Activated naive CD4-positive, alpha-beta T cell treated with anti-CD3 and anti-CD28 coated beads for 36 hours (primary cell): ENCODE measurements at regions of chr12 and their contacts with region 1.

Region 1: DNA sequence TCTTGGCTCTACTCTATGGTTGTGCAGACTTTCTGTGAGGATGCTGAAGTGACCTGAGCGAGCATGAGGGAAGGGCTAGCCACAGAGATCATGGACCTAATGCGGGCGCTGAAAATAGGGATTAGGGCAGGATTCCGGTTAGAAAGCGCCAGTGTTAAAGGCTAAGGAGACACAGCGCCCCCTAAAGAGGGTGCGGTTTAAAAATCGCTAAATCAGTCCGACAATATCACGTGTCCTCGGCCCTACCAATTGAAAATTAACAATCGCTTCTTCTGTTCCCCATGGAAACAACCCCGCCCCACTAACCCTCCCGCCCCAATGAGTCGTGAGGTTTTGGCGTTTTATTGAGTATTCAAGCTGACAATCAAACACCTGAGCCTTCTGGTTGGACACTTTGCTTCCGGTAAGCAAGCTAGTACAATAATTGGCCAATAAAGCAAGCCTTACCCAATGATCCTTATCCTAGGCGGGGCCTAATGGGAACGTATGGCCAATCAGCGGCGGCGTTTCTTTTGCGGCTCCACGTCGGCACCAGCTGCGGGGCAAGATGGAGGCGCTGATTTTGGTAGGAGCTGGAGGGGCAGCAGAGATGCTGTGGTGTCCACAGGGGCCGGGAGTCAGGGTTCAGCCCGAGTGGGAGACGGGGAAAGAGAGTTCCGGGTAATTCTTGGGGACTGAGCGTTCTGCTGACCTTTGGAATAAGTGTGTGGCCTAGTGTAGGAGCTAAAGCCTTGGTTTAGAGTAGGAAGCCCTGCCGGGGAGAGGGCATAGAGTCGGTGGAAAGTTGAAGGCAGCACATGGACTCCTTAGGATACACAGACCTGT is at the start of gene COPZ1:
- DNase-seq: peak; percentile 98
- H3K4me3 Mint-ChIP-seq: peak within 1 kb of the TSS; percentile 100
- H3K27ac Mint-ChIP-seq: peak within 1 kb of the TSS; percentile 93
- H3K4me1 Mint-ChIP-seq: peaks cover 44% of the 10 kb centered on the region
- H3K27me3 Mint-ChIP-seq: no peaks in the 10 kb centered on the region
- total RNA-seq, gene COPZ1: 98.0 to 105 TPM

Region 2: DNA sequence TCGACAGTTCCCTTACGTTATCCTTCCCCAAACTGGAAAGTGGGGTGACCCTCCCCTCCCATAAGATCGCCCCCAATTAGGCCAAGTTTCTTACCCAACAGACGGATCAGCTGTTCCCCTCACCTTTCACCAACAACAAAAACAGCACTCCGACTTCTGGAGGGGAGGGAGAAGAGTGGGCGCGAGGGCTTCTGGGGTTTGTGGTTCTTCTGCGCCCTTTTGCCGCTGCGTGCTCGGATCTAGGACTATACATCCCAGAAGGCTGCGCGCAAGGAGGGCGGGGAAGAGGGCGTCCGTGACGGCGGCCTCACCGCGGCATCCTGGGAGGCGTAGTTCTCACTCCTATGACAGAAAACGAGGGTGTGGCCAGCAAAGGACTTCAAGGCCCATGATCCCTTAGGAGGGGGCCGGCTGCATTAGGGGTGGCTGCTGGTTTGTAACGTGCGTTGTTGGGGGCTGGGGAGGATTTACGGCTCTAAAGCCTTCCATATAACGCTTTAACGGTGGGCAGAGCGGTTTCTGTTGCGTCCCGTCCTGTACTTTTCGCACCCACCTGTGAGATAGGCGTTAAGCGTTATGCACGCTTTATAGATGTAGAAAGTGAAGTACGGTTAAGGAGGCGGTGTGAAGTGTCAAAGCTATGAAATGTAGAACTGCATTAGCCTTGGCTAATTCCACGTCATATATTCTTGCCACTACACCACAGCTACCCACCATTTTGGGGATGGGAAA is 597.4 kb before region 1 on chr12 and contains the start of gene CALCOCO1:
- CTCF ChIA-PET with region 1: no interaction called
- intact Hi-C with region 1: loop called (anchors 1 kb)
- DNase-seq: peak; percentile 99
- H3K4me3 Mint-ChIP-seq: peak within 1 kb of the TSS; percentile 92
- H3K27ac Mint-ChIP-seq: peak within 1 kb of the TSS; percentile 87
- H3K4me1 Mint-ChIP-seq: peaks cover 16% of the 10 kb centered on the region
- H3K27me3 Mint-ChIP-seq: no peaks in the 10 kb centered on the region
- total RNA-seq, gene CALCOCO1: 8.1 to 8.3 TPM

Region 3: GRCh38 chr12:54075974-54076373 is 248.9 kb before region 1 on chr12:
- CTCF ChIA-PET with region 1: no interaction called
- intact Hi-C with region 1: no loop called
- DNase-seq: no peak
- H3K4me3 Mint-ChIP-seq: no peak overlapping the region
- H3K27ac Mint-ChIP-seq: no peak overlapping the region
- H3K4me1 Mint-ChIP-seq: peaks cover under 1% of the 10 kb centered on the region
- H3K27me3 Mint-ChIP-seq: peaks cover 4% of the 10 kb centered on the region

Region 4: DNA sequence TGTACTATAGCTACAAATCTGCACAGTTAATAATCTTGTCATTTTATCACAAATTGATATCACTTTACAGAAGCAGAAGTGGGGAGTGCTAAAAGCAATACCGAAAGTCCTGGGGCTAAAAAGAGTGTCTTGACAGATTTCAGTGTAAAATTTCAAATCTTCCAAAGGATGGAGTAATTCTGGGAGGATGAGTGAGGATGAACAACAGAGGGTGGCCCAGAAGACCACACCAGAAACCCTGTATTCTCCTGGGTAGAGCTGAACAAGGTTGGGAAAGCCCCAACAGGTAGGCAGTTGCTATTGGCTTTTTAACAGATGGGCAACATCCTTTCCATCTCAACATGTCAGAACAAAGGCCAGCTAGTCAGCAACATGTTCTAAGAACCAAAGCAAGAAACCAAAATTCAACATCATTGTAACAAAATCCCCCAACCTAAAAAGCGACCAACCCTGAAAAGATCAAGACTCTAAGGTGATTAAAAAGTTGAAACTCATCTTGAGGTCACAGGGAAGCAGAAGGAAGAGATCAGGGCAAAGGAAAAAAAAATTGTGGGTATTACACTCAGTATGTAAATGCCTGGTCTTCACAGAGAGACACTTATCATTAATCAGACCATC is 83.7 kb before region 1 on chr12:
- CTCF ChIA-PET with region 1: interaction called, 3 read pairs
- intact Hi-C with region 1: loop called (anchors 5 kb)
- DNase-seq: peak; percentile 16
- H3K4me3 Mint-ChIP-seq: no peak overlapping the region
- H3K27ac Mint-ChIP-seq: peak overlapping the region; percentile 80
- H3K4me1 Mint-ChIP-seq: peaks cover 16% of the 10 kb centered on the region
- H3K27me3 Mint-ChIP-seq: no peaks in the 10 kb centered on the region

Region 5: GRCh38 chr12:54294152-54294952 is 30.5 kb before region 1 on chr12:
- CTCF ChIA-PET with region 1: interaction called, 10 read pairs
- intact Hi-C with region 1: no loop called
- DNase-seq: peak; percentile 82
- H3K4me3 Mint-ChIP-seq: no peak overlapping the region
- H3K27ac Mint-ChIP-seq: no peak overlapping the region
- H3K4me1 Mint-ChIP-seq: no peaks in the 10 kb centered on the region
- H3K27me3 Mint-ChIP-seq: peaks cover 7% of the 10 kb centered on the region

Region 6: DNA sequence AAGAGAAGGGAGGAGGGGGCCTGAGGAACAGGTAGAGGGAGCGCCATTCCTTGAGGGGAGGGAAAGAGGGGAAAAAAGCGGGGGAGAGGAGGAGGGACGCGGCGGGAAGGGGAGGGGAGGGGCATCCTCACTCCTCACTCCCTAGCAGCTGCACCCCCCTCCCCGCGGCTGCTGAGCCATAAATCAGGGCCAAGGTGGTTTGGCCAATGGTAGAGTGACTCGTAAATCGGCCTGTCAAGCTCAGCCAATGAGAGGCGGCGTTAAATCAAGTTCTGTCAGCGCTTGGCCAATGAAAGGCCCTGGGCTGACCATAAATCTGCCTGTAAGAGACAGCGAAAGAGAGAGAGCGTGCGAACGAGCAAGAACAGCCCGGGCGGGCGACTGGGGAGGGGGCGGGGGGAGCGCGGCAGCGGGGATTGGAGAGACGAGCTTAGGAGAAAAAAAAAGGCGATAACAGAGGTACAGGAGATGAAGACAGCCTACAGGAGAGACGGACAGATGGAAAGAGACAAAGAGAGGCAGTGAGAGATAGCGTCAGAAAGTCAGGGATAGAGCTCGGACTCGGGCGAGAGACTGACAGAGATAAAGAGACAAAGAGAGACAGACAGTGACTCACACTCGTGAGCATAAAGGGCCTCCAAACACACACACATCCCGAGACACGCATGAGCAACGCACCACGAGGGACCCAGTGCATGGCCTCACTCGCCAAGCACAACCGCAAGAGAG is 34.4 kb after region 1 on chr12:
- CTCF ChIA-PET with region 1: interaction called, 7 read pairs
- intact Hi-C with region 1: loop called (anchors 1 kb)
- DNase-seq: peak; percentile 98
- H3K4me3 Mint-ChIP-seq: no peak overlapping the region
- H3K27ac Mint-ChIP-seq: no peak overlapping the region
- H3K4me1 Mint-ChIP-seq: peaks cover 19% of the 10 kb centered on the region
- H3K27me3 Mint-ChIP-seq: no peaks in the 10 kb centered on the region